ENCODE measurements at regions of chrX and their contacts with region 1.

Region 1: DNA sequence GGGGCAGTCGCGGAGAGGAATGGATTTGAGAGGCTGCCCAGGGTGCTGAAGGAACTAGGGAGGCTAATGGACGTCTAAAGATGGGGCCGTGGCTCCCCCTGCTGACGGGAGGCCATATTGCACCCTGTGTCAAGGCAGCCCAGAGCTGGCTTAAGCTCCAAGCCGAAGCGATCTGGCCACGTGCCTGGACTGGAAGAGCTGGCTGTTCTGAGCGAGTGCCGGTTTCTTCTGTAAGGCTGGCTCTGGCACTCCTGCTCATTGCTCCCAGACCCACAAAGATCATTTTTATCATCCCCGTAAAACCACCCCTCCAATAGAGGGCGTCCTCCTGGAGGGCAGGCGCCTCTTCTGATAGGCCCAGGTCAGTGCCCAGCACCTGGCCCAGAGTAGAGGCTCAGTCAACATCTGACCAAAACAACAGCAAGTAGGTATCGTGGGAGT is 5.6 kb downstream of the PNCK start:
- DNase-seq: peak; percentile 77 to 85
- ATAC-seq: peak; percentile 75 to 92 (median 88)
- H3K4me3 ChIP-seq: no peak overlapping the region
- H3K27ac ChIP-seq: no peak overlapping the region
- H3K4me1 ChIP-seq: no peaks in the 10 kb centered on the region
- H3K27me3 ChIP-seq: peaks cover 0 to 46% (median 9%) of the 10 kb centered on the region in 7 donors
- CTCF ChIP-seq: peak; percentile 47 to 81 (median 74)

Region 2: GRCh38 chrX:152941328-152942106 is 726.5 kb before region 1 on chrX:
- intact Hi-C with region 1: loop called in 1 of 10 experiments (anchors 10 kb)
- DNase-seq: peak; percentile 89 to 90
- ATAC-seq: peak; percentile 94 to 99 (median 98)
- H3K4me3 ChIP-seq: peak overlapping the region; percentile 41 to 69 (median 60)
- H3K27ac ChIP-seq: peak overlapping the region in 9 of 10 donors; percentile 68 to 89 (median 82)
- H3K4me1 ChIP-seq: peaks cover 0 to 13% (median 0%) of the 10 kb centered on the region in 9 donors
- H3K27me3 ChIP-seq: no peaks in the 10 kb centered on the region
- CTCF ChIP-seq: peak; percentile 52 to 91 (median 83)

Region 3: GRCh38 chrX:152958524-152959465 is 709.2 kb before region 1 on chrX:
- intact Hi-C with region 1: loop called in 2 of 10 experiments (anchors 10 kb)
- DNase-seq: peak; percentile 86 to 87
- ATAC-seq: peak; percentile 94 to 99 (median 99)
- H3K4me3 ChIP-seq: peak overlapping the region in 9 of 10 donors; percentile 7 to 47 (median 39)
- H3K27ac ChIP-seq: peak overlapping the region in 8 of 10 donors; percentile 35 to 77 (median 62)
- H3K4me1 ChIP-seq: peaks cover 0 to 9% (median 0%) of the 10 kb centered on the region in 9 donors
- H3K27me3 ChIP-seq: peaks cover 0 to 18% (median 0%) of the 10 kb centered on the region in 7 donors
- CTCF ChIP-seq: peak; percentile 65 to 95 (median 83)

Region 4: DNA sequence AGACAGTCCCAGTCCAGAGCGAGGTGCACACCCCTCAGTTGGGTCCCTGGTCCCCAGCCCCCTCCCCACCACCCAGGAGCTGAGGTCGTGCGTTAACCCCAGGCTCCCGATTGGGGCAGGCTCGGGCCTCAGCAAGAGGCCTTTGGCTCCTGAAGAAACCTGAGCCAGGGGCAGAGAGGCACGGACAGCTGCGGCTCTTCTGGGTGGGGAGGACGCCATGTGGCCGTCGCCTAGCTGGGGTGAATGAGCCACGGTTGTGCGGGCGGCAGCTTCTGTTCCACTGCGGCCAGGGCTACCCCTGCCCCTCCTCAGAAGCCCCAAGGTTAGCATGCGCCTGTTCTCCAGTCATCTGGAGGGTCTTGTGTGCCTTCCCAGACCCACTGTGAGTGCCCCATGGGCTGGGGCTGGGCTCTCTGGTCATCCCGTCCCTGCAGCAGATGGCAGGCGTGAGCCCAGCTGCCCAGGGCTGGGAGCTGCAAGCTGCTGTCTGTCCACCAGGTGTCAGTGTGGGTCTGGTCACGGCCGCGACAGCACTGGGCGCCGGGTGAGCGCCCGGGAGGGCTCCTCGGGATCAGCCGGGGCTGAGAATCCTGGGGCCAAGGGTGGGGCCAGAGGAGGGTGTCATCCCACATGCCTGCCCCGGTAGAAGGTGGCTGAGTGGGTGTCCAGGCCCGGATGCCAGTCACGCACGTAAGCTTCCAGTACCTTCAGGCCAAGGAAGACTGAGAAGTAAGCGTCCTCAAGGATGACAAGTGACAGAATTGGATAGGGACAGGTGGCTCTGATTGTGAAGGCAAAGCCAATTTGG is 128.6 kb before region 1 on chrX:
- intact Hi-C with region 1: loop called in 4 of 10 experiments (anchors 5 kb)
- DNase-seq: peak; percentile 50 to 66
- ATAC-seq: peak; percentile 76 to 92 (median 88)
- H3K4me3 ChIP-seq: no peak overlapping the region
- H3K27ac ChIP-seq: no peak overlapping the region
- H3K4me1 ChIP-seq: no peaks in the 10 kb centered on the region
- H3K27me3 ChIP-seq: peaks cover 0 to 34% (median 0%) of the 10 kb centered on the region in 7 donors
- CTCF ChIP-seq: peak; percentile 53 to 94 (median 80)

Region 5: DNA sequence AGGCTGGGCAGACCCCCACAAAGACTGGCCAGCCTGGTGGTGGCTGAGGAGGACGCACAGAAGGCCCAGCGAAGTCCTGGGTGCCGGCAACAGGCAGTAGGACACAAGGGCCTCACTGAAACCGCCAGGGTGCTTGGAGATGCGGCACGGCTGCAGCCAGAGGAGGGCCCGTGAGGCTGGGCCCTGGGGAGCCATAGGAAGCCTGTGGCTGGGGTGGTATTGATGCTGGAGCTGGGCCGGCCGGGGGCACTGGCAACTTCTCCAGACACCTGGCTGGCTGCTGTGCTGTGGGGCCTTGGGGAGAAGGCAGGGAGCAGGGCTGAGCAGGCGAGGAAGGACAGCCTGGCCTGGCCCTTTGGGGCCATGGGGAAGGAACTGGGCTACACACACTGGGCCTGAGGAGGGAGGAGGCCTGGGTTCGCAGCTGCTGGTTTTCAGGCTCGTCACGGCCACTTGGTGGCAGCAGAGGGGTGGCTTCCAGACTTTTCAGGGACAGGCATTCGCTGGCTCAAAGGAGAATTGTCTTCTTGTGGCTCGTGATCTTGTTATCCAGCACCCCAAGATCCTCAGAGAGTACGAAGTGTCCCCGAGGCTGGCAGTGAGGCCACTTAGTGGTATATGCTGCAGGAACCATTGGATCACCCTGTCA is 113.3 kb before region 1 on chrX:
- intact Hi-C with region 1: loop called in 8 of 10 experiments (anchors 2 to 5 kb)
- DNase-seq: peak; percentile 48 to 69
- ATAC-seq: peak; percentile 42 to 81 (median 68)
- H3K4me3 ChIP-seq: no peak overlapping the region
- H3K27ac ChIP-seq: no peak overlapping the region
- H3K4me1 ChIP-seq: no peaks in the 10 kb centered on the region
- H3K27me3 ChIP-seq: no peaks in the 10 kb centered on the region
- CTCF ChIP-seq: peak; percentile 29 to 70 (median 64)

Region 6: DNA sequence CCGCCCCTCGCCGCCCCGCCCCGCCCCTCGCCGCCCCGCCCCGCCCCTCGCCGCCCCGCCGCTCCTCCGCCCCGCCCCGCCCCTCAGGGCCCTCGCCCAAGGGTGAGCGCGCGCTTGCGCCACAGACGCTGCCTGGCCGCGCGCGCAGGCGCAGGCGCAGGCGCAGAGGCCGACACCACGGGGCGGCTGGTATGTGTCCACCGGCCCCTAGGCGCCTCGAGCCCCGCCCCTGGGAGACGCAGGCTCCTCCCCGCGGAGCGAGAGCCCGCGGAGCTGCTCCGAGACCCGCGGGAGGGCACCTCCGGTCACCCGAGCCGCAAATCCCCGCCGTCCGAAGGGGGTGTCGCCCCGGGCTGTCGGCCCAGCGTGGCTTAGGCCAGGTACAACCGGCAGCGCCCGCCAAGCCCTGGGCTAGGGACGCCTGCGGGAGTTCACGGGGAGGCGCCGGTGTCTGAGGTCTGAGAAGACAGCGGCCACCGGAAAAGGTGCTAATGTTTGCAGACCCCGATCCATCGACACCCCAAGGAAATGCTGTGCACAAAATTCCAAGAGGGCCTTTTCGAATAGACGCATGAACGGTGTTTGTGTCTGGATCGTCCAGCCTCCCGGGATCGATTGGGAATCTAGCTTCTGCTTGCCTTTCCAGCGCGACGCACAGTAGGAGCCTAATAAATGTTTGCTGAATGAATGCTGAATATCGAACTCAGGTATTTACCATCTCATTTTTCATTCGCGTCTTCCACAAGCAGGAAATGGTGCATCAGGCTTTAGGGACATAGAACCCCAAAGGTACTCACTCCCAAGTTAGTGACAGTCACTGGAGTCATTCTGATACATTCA is 68.6 kb before region 1 on chrX:
- intact Hi-C with region 1: loop called in 1 of 10 experiments (anchors 10 kb)
- DNase-seq: peak; percentile 84 to 92
- ATAC-seq: peak; percentile 94 to 98 (median 96)
- H3K4me3 ChIP-seq: peak overlapping the region; percentile 27 to 75 (median 68)
- H3K27ac ChIP-seq: peak overlapping the region in 9 of 10 donors; percentile 44 to 83 (median 70)
- H3K4me1 ChIP-seq: peaks cover 0 to 25% (median 10%) of the 10 kb centered on the region in 9 donors
- H3K27me3 ChIP-seq: no peaks in the 10 kb centered on the region
- CTCF ChIP-seq: no peak

Region 7: DNA sequence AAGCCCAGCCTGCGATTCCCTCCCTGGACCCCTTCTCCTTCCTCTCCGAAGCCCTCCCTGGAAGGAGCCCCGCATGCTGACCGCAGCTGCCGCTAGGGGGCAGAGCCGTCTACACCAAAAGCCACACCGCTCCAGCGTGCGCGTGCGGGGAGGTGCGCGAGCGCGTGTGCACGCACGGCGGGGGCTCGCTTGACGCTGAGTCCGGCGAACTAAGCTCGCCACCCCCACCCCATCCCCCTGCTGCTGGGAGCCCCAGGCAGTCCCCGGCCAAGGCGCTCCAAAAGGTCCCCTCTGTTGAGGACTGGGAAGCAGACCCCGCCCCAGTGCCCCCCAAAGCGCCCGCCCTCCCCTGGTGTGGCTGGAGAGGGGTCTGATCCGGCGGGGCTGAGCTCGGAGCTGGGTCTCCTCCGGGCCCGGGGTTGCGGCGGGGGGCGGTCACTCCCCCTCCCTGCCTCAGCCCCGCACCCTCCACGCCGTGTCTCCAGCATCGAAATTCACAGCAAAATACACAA is 58.0 kb before region 1 on chrX:
- intact Hi-C with region 1: loop called in 6 of 10 experiments (anchors 5 to 10 kb)
- DNase-seq: peak; percentile 64 to 77
- ATAC-seq: peak; percentile 88 to 97 (median 94)
- H3K4me3 ChIP-seq: peak overlapping the region; percentile 15 to 52 (median 41)
- H3K27ac ChIP-seq: no peak overlapping the region
- H3K4me1 ChIP-seq: peaks cover 0 to 14% (median 11%) of the 10 kb centered on the region in 9 donors
- H3K27me3 ChIP-seq: peaks cover 0 to 82% (median 0%) of the 10 kb centered on the region in 7 donors
- CTCF ChIP-seq: peak; percentile 45 to 83 (median 76)

Region 8: GRCh38 chrX:153924149-153924861 is 256.3 kb after region 1 on chrX:
- intact Hi-C with region 1: no loop called
- DNase-seq: no peak
- ATAC-seq: peak in 3 of 8 donors; percentile 10 to 16 (median 13)
- H3K4me3 ChIP-seq: peak overlapping the region in 5 of 10 donors; percentile 8 to 71 (median 20)
- H3K27ac ChIP-seq: peak overlapping the region in 9 of 10 donors; percentile 28 to 99 (median 96)
- H3K4me1 ChIP-seq: peaks cover 0 to 78% (median 51%) of the 10 kb centered on the region in 9 donors
- H3K27me3 ChIP-seq: peaks cover 0 to 71% (median 0%) of the 10 kb centered on the region in 7 donors
- CTCF ChIP-seq: peak in 8 of 9 donors; percentile 9 to 47 (median 28)